AG04449 (cell line): ENCODE measurements at regions of chr15 and their contacts with region 1.

Region 1: DNA sequence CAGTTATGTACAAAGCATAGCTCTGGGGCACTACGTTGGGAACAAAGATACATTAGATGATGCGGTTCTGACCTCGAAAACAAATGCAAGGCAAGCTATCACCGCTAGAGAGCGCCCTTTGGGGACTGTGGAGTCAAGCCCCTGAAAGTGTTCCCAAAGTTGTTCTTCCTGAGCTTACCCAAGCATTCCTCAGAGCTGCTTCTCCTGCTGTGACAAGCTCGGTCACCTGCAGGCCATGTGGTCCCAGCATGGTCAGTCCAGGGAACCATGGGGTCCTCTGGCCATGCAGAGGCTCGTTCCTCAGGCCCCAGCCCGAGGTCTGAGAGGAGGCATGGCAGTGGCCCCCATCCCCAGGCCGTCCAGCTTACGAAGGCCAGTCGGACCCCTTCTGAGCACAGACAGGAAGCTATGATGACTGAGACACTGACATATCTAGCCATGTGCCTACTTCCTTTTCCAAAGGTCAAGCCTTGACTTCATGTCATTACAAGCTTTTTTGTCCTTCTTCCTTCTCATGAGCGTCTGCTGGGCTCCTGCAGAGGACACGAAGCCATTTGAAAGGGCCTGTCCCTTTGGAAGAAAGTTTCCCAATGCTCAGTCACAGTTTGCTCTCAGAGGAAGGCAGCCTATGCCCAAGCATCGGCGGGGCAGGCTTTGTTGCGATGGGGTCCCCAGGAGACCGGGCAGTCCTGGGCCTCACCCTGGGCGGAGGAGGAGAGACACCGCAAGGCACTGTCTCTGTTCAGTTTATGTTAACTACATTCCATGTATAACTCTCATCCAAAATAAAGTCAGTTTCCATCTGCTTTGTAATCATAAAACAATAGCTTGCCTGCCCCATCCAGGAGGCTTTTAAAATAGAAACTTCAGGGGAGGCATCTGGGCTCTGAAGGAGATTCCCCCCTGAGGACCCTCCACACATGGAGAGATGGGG is 79.3 kb downstream of the ATP10A start:
- DNase-seq: no peak
- H3K4me3 ChIP-seq: no peak overlapping the region
- CTCF ChIP-seq: peak; percentile 62

Region 2: DNA sequence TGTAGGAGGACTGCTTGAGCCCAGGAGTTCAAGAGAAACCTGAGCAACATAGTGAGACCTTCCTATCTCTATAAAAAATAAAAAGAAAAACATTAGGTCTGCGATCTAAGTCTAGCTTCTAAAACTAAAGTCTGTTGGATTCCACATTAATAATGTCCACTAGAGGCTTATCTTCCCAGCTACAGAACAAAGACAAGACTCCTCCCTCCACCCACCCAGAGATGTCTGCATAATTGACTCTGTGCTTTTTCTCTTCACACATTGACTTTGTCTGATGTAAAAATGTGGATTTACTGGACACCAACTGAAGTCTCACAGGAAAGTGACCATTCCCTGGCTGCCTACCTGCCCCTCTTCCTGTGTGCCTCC is 12.6 kb before region 1 on chr15:
- CTCF ChIA-PET with region 1: interaction called, 11 read pairs
- POLR2A ChIA-PET with region 1: interaction called, 7 read pairs
- DNase-seq: no peak
- H3K4me3 ChIP-seq: no peak overlapping the region
- CTCF ChIP-seq: no peak

Region 3: GRCh38 chr15:25830844-25831451 is 47.1 kb after region 1 on chr15:
- CTCF ChIA-PET with region 1: interaction called, 4 read pairs
- POLR2A ChIA-PET with region 1: interaction called, 11 read pairs
- DNase-seq: peak; percentile 99
- H3K4me3 ChIP-seq: peak overlapping the region; percentile 24; the same call in 1 of the 2 replicates
- CTCF ChIP-seq: no peak

Region 4: DNA sequence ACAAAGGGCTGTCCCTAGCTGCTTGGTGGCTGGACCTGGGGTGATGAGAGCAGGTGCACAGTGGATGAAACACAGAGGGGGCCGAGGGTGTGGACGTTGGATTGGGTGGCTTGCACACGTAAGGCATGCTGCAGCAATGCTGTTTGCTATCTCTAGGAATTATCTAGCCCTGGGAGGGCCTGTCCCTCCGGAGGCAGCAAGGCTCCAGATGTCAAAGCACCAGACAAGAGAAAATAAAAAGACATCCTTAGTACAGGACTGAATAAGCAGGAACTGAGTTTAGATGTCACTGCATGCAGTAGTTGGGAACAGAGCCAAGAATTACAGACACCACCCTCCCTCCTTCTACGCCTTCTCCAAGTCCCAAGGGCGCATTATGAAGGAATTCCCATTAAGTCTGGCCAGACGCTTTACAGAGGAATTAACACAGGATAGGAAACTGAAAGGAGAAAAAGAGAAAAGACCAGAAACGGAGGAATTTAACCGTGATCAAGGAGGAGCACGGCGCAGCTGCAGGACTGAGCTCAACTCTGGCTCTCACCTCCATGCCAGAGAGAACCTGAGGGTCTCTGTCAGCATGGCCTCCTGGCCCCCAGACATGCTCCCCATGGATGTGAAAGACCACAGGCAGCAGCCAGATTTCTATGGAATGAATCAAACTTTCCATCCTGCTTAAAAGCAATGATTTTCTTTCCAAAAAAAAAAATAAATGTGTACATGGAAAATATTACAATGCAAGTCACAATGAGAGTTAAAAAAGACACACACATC is 65.5 kb after region 1 on chr15:
- CTCF ChIA-PET with region 1: interaction called, 10 read pairs
- POLR2A ChIA-PET with region 1: no interaction called
- DNase-seq: peak; percentile 92
- H3K4me3 ChIP-seq: peak overlapping the region; percentile 47
- CTCF ChIP-seq: no peak

Region 5: DNA sequence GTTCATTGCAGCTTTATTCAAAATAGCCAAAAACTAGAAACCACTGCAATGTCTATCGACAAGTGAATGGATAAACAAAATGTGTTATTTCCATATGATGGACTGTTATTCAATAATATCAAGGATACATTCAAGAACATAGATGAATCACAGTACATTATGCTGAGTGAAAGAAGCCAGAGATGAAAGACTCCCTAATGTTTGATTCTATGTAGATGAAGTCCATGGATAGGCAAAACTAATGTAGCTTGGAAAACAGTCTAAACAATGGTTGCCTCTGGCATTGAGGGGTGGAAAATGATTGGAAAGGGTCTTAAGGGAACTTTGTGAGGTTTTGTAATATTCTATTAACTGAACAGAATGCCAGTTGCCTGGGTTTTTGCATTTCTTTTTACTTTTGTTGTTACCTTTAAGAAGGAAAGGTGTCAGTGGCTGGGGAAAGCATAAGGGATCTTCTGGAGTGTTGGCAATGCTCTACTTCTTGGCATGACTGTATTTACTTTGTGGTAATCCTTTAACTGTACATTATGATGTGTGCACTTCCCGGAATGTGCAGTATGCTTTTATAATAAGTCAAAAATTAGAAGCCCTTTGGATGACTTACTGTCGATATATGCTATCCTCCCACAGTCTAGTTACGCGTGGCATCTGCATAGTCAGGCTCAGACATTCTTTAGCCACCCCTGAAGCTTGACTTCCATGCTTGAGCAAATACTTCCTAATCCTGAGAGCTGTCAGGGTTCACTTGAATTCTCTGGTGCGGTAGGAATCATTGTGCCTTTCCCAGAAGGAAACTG is 99.8 kb after region 1 on chr15:
- CTCF ChIA-PET with region 1: interaction called, 10 read pairs
- POLR2A ChIA-PET with region 1: interaction called, 4 read pairs
- DNase-seq: peak; percentile 99
- H3K4me3 ChIP-seq: no peak overlapping the region
- CTCF ChIP-seq: no peak